Activated CD4-positive, alpha-beta memory T cell treated with anti-CD3 and anti-CD28 coated beads for 36 hours (primary cell): ENCODE measurements at regions of chrX and their contacts with region 1.

Region 1: GRCh38 chrX:65534450-65535292 is at the start of gene LAS1L:
- DNase-seq: peak; percentile 95
- H3K4me3 Mint-ChIP-seq: peak within 1 kb of the TSS; percentile 95
- H3K27ac Mint-ChIP-seq: peak within 1 kb of the TSS; percentile 88
- H3K4me1 Mint-ChIP-seq: peaks cover 15% of the 10 kb centered on the region
- H3K27me3 Mint-ChIP-seq: no peaks in the 10 kb centered on the region
- total RNA-seq, gene LAS1L: 56.7 to 57.9 TPM

Region 2: DNA sequence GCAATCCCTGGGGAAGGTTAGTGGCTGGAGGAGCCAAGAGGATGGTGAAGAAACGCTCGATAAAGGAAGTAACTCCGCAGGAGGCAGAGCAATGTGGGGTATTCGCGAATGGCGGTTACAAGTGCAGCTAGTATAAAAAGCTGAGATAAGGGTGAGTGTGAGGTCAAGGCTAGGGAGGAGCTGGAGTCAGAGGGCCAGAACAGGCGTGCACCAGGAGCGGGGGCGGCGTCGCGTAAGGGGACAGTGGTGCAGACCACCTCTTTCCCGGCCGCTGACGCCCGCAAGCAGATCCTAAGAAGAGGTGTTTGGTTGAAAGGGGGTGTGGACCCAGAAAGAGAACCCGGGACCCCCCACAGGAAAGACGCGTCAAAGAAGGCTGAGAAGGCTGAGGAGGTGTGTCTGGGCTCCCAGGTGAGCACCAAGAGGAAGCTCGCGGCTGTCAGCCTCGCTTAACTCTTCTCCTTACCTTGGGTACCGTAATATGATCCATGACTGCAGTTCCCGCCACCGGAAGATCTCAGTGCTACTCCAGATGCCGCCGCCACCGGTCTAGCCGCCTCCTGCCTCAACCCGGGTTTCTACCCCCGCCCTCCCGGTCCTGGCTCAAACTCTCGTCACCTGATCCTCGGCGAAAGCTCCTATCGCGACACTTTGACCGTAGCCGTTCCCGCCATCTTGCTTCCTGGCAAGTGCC is 1139.7 kb before region 1 on chrX and contains the start of gene MTMR8:
- CTCF ChIA-PET with region 1: no interaction called
- POLR2A ChIA-PET with region 1: no interaction called
- intact Hi-C with region 1: loop called (anchors 10 kb)
- DNase-seq: peak; percentile 86
- H3K4me3 Mint-ChIP-seq: peak within 1 kb of the TSS; percentile 90
- H3K27ac Mint-ChIP-seq: peak within 1 kb of the TSS; percentile 81
- H3K4me1 Mint-ChIP-seq: peaks cover 22% of the 10 kb centered on the region
- H3K27me3 Mint-ChIP-seq: no peaks in the 10 kb centered on the region
- total RNA-seq, gene MTMR8: 5.0 to 5.8 TPM

Region 3: GRCh38 chrX:64975989-64976672 is 558.5 kb before region 1 on chrX and contains the start of gene ZC4H2:
- CTCF ChIA-PET with region 1: no interaction called
- POLR2A ChIA-PET with region 1: no interaction called
- intact Hi-C with region 1: loop called (anchors 1 kb)
- DNase-seq: peak; percentile 79
- H3K4me3 Mint-ChIP-seq: peak within 1 kb of the TSS; percentile 79
- H3K27ac Mint-ChIP-seq: peak within 1 kb of the TSS; percentile 44
- H3K4me1 Mint-ChIP-seq: peaks cover 16% of the 10 kb centered on the region
- H3K27me3 Mint-ChIP-seq: no peaks in the 10 kb centered on the region
- total RNA-seq, gene ZC4H2: 8.9 to 9.1 TPM

Region 4: DNA sequence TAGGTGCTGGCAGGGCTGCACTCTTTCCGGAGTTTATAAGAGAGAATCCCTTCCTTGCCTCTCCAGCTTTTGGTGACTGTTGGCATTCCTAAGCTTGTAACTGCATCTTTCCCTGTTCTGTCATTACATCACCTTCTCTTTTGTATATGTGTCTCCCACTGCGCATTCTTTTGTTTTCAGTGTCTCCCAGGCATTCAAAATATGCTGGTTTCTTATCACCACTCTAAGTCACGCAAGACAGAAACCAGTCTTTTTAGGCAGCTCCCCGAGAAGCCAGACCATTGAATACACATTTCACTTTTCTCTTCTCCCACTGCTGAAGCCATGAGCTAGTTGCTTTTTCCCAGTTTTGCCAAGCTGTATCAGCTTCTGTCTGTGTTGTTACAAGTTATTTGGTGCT is 71.1 kb before region 1 on chrX:
- CTCF ChIA-PET with region 1: no interaction called
- POLR2A ChIA-PET with region 1: no interaction called
- intact Hi-C with region 1: no loop called
- DNase-seq: no peak
- H3K4me3 Mint-ChIP-seq: no peak overlapping the region
- H3K27ac Mint-ChIP-seq: no peak overlapping the region
- H3K4me1 Mint-ChIP-seq: no peaks in the 10 kb centered on the region
- H3K27me3 Mint-ChIP-seq: no peaks in the 10 kb centered on the region